K562 (cell line): ENCODE measurements at regions of chr12 and their contacts with region 1.

Region 1: GRCh38 chr12:69341328-69341727 is 6.9 kb upstream of the LYZ start:
- DNase-seq: peak in 1 of 4 experiments; percentile 18
- ATAC-seq: peak; percentile 44
- H3K4me3 ChIP-seq: no peak overlapping the region
- H3K27ac ChIP-seq: no peak overlapping the region
- H3K4me1 ChIP-seq: peaks cover 4 to 16% of the 10 kb centered on the region in 2 experiments; a peak in 4 of 5 replicates
- H3K27me3 ChIP-seq: no peaks in the 10 kb centered on the region
- CTCF ChIP-seq: no peak
- EP300 ChIP-seq: no peak
- POLR2A ChIP-seq: no peak
- RAD21 ChIP-seq: no peak

Region 2: DNA sequence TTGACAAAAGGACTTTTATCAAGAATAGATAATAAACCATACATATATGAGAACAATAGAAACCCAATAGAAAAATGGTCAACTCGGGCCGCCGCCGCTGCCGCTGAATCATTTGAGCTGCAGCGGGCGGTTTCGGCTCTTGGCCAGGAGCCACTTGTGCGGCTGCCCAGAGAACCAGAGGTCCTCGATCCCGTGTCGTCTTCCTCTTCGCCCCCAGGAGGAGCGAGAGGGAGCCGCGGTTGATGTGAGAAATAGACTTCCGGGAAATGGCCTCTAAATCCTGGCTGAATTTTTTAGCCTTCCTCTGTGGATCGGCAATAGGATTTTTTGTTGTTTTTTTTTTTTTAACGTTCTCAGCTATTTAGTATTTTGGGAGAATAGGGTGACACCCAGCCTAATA is 57.2 kb before region 1 on chr12:
- CTCF ChIA-PET with region 1: no interaction called
- POLR2A ChIA-PET with region 1: no interaction called
- in situ Hi-C with region 1: no loop called
- intact Hi-C with region 1: no loop called
- DNase-seq: peak; percentile 36 to 92 (median 61)
- ATAC-seq: peak; percentile 100
- H3K4me3 ChIP-seq: no peak overlapping the region
- H3K27ac ChIP-seq: no peak overlapping the region; the same call in 2 of the 3 replicates
- H3K4me1 ChIP-seq: peaks cover 3 to 4% of the 10 kb centered on the region in 2 experiments; a peak in 3 of 5 replicates
- H3K27me3 ChIP-seq: no peaks in the 10 kb centered on the region
- CTCF ChIP-seq: peak; percentile 49 to 59 (median 54)
- EP300 ChIP-seq: no peak
- POLR2A ChIP-seq: no peak
- RAD21 ChIP-seq: peak in 1 of 2 experiments; percentile 26; a peak in 1 of 4 replicates

Region 3: DNA sequence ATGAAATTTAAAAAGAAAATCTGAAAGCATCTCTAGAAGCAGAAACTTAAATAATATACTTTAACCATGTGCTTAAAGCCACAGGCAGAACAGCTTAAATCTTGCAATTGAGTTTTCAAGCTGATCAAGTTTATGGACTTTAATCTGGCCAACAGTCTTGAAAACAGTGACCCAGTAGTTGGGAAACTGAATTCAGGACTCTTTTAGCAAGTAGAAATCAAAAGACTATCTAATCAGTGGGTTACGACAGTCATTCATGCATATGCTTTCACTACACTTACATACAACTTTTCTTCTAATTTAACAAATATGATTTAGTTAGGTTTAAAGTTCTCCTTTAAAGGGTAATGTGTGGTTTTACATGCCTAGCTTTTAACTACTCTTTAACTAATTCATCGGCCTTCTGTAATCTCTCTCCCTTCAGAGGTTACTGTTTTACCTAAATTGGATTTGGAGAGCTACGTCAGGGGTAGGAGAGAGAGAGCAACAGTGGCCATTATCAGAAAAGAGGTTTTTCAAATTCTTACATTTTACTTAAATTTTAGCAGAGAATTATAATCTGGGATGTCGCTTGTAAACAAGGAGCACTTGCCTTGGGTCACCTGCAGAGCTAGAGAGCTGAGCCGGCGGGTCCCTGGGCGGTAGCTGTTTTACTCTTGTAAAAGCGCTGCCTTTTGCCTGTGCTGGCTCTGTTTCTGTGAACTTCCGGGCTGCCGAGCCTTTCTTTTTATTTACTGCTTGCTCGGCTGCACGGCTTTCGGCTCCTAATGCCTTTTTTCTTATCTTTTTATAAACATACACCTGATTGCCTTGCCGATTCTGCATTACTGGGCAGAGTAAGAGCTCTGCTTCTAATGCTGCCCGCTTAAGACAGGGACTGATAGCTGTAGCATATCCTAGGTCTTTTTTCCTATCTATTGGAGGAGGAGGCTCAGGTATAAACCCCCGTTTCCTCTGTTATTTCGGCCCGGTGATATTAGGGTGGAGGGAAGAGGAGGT is 10.6 kb before region 1 on chr12:
- CTCF ChIA-PET with region 1: no interaction called
- POLR2A ChIA-PET with region 1: interaction called, 12 read pairs
- in situ Hi-C with region 1: no loop called
- intact Hi-C with region 1: no loop called
- DNase-seq: peak; percentile 42 to 73 (median 50)
- ATAC-seq: peak; percentile 82
- H3K4me3 ChIP-seq: peak overlapping the region; percentile 30
- H3K27ac ChIP-seq: peak overlapping the region; percentile 52; the same call in 2 of the 3 replicates
- H3K4me1 ChIP-seq: peaks cover 0 to 14% of the 10 kb centered on the region in 2 experiments
- H3K27me3 ChIP-seq: no peaks in the 10 kb centered on the region
- CTCF ChIP-seq: no peak
- EP300 ChIP-seq: no peak; the same call in 1 of the 2 replicates
- POLR2A ChIP-seq: peak; percentile 75
- RAD21 ChIP-seq: no peak